Endothelial cell of umbilical vein (primary cell): ENCODE measurements at regions of chr5 and their contacts with region 1.

Region 1: DNA sequence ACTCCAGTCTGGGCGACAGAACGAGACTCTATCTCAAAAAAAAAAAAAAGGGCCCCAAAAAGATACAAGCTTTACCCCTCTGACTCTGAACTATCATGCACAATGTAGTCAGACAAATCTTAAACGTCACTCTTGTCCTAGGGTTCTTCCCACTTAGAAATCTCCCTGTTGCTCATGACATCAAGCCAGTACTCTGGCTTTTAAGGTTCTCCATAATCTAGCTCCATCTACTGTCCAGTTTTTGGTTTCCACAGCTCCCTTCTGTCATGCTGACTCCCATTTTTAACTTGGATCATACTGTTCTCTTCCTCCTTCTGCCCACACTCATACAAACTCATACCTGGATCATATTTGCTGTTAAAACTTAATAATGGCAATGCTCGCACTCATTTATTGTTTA is 156.7 kb upstream of the TLX3 start:
- DNase-seq: peak; percentile 25
- H3K4me3 ChIP-seq: no peak overlapping the region
- H3K27ac ChIP-seq: no peak overlapping the region
- H3K4me1 ChIP-seq: peaks cover 19% of the 10 kb centered on the region
- H3K27me3 ChIP-seq: no peaks in the 10 kb centered on the region
- CTCF ChIP-seq: no peak
- POLR2A ChIP-seq: no peak

Region 2: GRCh38 chr5:171092194-171092593 is 60.2 kb before region 1 on chr5:
- CTCF ChIA-PET with region 1: no interaction called
- POLR2A ChIA-PET with region 1: no interaction called
- dilution Hi-C with region 1: no loop called
- intact Hi-C with region 1: loop called (anchors 2 kb)
- DNase-seq: peak; percentile 71
- H3K4me3 ChIP-seq: no peak overlapping the region
- H3K27ac ChIP-seq: peak overlapping the region; percentile 66
- H3K4me1 ChIP-seq: peaks cover 12% of the 10 kb centered on the region
- H3K27me3 ChIP-seq: no peaks in the 10 kb centered on the region
- CTCF ChIP-seq: no peak
- POLR2A ChIP-seq: no peak

Region 3: DNA sequence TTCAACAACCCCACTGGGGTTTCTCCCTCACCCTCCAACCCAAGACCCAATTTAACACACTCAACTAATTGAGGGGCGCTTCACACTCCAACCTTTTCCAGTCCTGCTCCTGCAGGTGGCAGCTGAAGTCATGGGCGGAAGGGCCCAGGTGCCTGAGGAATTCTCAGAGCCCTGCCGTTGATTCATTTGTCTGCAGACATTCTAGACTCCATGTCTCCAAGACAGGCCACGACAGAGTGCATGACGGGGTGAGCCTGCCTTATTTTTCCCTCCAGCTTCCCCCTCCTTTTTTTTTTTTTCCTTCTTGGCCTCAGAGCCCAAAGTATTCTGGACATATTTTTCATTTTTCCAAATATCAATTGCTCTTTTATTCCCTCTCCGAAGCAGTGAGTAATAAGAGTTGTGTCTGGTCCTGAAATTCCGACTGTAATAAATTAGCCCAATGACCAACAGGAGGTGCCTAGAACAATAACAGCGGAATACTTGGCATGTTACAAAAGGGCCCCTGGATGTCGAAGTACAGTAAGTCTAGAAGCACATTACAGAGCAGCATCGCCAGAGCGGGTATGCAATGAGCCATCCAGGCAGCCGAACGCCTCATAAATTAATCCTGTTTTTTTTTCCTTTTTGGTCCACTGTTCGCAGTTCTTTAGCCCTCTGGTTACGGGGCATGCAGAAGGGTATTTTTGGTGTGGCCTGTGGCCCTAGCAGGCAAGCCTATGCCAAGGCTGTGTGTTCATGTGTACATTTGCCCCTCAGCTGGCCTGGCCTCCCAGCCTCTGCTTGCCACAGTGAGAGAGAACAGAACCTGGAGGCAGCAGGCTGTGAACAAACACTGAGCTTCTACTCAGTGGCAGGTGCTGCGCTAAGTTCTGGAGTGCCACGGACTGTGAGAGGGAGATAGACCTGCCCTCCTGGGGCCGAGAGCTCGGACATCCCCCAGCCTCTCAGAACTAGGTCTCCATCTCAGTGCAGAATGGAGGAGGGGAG is 624.7 kb after region 1 on chr5:
- CTCF ChIA-PET with region 1: no interaction called
- POLR2A ChIA-PET with region 1: no interaction called
- dilution Hi-C with region 1: no loop called
- intact Hi-C with region 1: no loop called
- DNase-seq: peak; percentile 45
- H3K4me3 ChIP-seq: no peak overlapping the region
- H3K27ac ChIP-seq: no peak overlapping the region
- H3K4me1 ChIP-seq: no peaks in the 10 kb centered on the region
- H3K27me3 ChIP-seq: peaks cover 8% of the 10 kb centered on the region in 2 experiments
- CTCF ChIP-seq: no peak
- POLR2A ChIP-seq: no peak